Keratinocyte (primary cell): ENCODE measurements at regions of chr16 and their contacts with region 1.

Region 1: GRCh38 chr16:23966597-23967394 is 131.0 kb downstream of the PRKCB start:
- DNase-seq: no peak
- H3K4me3 ChIP-seq: no peak overlapping the region
- H3K27ac ChIP-seq: no peak overlapping the region
- H3K4me1 ChIP-seq: no peaks in the 10 kb centered on the region
- H3K27me3 ChIP-seq: no peaks in the 10 kb centered on the region
- CTCF ChIP-seq: no peak

Region 2: GRCh38 chr16:23930791-23931190 is 36.0 kb before region 1 on chr16:
- dilution Hi-C with region 1: loop called (anchors 5 kb)
- DNase-seq: no peak
- H3K4me3 ChIP-seq: no peak overlapping the region
- H3K27ac ChIP-seq: no peak overlapping the region
- H3K4me1 ChIP-seq: no peaks in the 10 kb centered on the region
- H3K27me3 ChIP-seq: no peaks in the 10 kb centered on the region
- CTCF ChIP-seq: no peak